AG04449 (cell line): ENCODE measurements at regions of chr14 and their contacts with region 1.

Region 1: GRCh38 chr14:103546652-103547454 is 15.6 kb downstream of the BAG5 start:
- DNase-seq: no peak
- H3K4me3 ChIP-seq: no peak overlapping the region
- CTCF ChIP-seq: peak; percentile 92

Region 2: GRCh38 chr14:103528587-103529382 is 18.1 kb before region 1 on chr14 and contains the start of gene TRMT61A:
- CTCF ChIA-PET with region 1: interaction called, 368 read pairs
- POLR2A ChIA-PET with region 1: interaction called, 3 read pairs
- DNase-seq: no peak
- H3K4me3 ChIP-seq: peak within 1 kb of the TSS; percentile 93
- CTCF ChIP-seq: no peak

Region 3: GRCh38 chr14:103562429-103563225 is 15.8 kb after region 1 on chr14 and contains the starts of genes BAG5 and COA8:
- CTCF ChIA-PET with region 1: interaction called, 79 read pairs
- POLR2A ChIA-PET with region 1: interaction called, 10 read pairs
- DNase-seq: no peak
- H3K4me3 ChIP-seq: peak within 1 kb of the TSS; percentile 67
- CTCF ChIP-seq: no peak